ENCODE measurements at regions of chr1 and their contacts with region 1.

Region 1: DNA sequence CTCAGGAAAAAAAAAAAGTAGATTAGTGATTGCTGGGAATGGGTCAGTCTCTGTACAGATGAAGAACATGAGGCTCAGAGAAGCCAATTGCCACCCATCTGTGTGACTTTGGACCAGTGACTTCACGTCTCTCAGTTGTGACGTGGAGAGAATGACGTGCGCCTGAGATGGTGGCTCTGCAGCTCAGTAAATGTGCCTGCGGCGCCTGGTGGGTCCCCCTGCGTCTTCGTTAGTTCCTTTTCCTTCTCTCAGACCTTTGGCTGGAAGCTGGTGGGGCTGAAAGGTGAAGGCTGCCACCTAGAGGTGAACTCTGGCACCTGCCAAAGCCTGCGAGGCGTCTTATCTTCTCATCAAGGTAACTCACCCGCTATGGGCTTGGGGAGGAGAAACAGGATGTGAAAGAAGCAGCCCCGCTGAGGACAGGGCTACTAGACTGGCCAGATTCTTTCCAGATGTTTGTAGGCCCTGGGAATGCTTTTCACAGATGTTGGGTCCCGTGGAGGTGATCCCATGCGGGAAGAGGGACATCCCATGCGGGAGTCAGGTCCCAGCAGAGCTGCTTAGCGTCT is 8.7 kb upstream of the E2F2 start:
- DNase-seq: peak; percentile 90
- H3K4me3 Mint-ChIP-seq: no peak overlapping the region
- H3K27ac Mint-ChIP-seq: no peak overlapping the region
- H3K4me1 Mint-ChIP-seq: peaks cover 18% of the 10 kb centered on the region
- H3K27me3 Mint-ChIP-seq: no peaks in the 10 kb centered on the region
- CTCF ChIP-seq: peak; percentile 91

Region 2: GRCh38 chr1:23585447-23586015 is 45.7 kb after region 1 on chr1:
- CTCF ChIA-PET with region 1: no interaction called
- POLR2A ChIA-PET with region 1: no interaction called
- intact Hi-C with region 1: no loop called
- DNase-seq: peak; percentile 96
- H3K4me3 Mint-ChIP-seq: peak overlapping the region; percentile 23
- H3K27ac Mint-ChIP-seq: peak overlapping the region; percentile 85
- H3K4me1 Mint-ChIP-seq: peaks cover 43% of the 10 kb centered on the region
- H3K27me3 Mint-ChIP-seq: no peaks in the 10 kb centered on the region
- CTCF ChIP-seq: no peak

Region 3: DNA sequence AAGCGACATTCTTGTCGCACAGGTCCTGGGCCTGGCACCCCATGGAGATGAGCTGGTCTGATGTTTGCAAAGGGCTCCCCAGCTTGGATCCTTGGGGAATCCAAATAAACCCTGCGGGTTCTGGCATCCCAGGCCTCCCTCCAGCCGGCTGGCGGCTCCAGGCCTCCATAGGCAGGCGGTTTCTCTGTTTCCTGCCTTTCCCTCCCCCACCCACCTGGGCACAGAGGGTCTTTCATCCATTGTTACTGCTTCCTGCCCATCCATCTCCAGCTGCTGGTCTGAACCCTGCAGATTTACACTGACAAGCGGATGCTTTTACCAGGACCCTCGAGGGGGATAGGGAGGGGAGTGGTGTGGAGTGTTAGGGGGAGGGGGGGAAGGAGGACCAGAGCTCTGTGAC is 58.6 kb after region 1 on chr1:
- CTCF ChIA-PET with region 1: no interaction called
- POLR2A ChIA-PET with region 1: no interaction called
- intact Hi-C with region 1: no loop called
- DNase-seq: no peak
- H3K4me3 Mint-ChIP-seq: no peak overlapping the region
- H3K27ac Mint-ChIP-seq: no peak overlapping the region
- H3K4me1 Mint-ChIP-seq: peaks cover 25% of the 10 kb centered on the region
- H3K27me3 Mint-ChIP-seq: no peaks in the 10 kb centered on the region
- CTCF ChIP-seq: no peak

Region 4: DNA sequence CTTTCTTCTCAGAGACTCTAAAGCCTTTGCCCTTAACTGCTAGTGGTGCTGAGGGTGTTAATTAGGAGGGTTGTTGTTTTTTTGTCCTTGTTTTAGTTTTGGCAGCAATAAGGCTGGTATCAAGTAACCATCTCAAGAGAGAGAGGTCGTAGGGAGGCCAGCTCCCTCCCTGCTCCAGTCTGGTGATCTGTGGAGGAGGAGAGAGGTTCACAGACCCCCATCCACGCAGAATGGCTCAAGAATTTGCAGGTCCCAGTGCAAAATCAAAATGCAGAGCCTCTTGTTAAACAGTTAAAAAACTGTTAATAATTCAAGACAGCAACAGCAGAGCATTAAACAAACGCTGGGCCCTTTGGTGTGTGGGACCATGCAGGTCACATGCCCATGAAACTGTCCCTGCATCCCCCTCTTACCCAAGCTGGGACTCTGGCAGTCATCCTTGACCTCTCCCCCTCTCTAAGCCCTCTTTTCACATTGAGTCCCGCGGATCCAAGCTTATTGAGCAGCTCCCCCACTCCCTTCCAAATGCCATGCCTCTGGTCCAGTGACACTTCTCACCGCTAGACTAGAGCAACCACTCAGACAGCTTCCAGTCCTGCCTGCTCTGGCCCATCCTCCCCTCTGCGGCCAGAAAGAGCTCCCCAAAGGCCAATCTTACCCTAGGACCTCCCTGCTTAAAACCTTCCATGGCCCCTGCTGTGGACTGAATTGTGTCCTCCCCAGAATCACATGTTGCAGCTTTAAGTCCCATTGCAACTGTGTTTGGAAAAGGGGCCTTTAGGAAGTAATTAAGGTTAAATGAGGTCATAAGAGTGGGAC is 104.2 kb after region 1 on chr1:
- CTCF ChIA-PET with region 1: interaction called, 472 read pairs
- POLR2A ChIA-PET with region 1: interaction called, 3 read pairs
- intact Hi-C with region 1: no loop called
- DNase-seq: no peak
- H3K4me3 Mint-ChIP-seq: no peak overlapping the region
- H3K27ac Mint-ChIP-seq: no peak overlapping the region
- H3K4me1 Mint-ChIP-seq: no peaks in the 10 kb centered on the region
- H3K27me3 Mint-ChIP-seq: no peaks in the 10 kb centered on the region
- CTCF ChIP-seq: no peak